ENCODE measurements at regions of chr18 and their contacts with region 1.

Region 1: DNA sequence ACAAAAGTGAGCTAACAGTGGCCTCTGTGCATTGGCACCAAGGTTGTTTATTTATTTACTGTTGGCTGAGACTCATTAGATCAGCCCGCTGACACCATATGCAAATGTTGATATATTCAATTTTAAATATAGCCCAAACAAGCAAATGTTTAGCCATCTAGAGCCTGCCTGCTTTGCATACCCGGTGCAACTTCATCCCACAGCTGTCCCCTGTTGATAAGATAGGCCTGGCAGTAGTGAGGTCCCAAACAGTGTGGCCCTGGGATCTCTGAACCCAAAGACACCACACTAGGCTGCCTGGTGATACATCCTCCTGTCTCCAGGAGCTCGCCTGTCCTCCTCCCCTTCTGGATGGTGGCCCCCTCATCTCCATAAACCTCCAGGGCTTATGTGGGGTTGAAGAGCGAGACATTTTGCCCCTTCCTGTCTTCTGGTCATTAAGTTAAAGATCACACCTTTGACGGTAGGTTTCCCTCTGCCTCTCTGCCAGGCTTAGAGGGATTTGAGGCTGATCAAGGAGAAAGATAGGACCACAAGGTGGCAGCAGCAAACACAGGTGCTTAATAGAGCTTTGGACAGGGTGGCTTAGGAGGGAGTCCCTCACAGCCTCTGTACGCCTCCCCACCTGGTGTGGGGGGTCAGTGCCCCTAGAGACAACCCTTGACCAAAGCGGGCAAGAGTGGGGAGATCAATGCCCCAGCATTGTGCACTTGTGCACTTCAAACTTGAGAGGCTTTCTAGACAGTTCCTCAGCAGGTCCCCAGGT is 23.7 kb upstream of the MYO5B start:
- DNase-seq: peak; percentile 38
- H3K4me3 Mint-ChIP-seq: no peak overlapping the region
- H3K27ac Mint-ChIP-seq: no peak overlapping the region
- H3K4me1 Mint-ChIP-seq: no peaks in the 10 kb centered on the region
- H3K27me3 Mint-ChIP-seq: peaks cover 18% of the 10 kb centered on the region

Region 2: DNA sequence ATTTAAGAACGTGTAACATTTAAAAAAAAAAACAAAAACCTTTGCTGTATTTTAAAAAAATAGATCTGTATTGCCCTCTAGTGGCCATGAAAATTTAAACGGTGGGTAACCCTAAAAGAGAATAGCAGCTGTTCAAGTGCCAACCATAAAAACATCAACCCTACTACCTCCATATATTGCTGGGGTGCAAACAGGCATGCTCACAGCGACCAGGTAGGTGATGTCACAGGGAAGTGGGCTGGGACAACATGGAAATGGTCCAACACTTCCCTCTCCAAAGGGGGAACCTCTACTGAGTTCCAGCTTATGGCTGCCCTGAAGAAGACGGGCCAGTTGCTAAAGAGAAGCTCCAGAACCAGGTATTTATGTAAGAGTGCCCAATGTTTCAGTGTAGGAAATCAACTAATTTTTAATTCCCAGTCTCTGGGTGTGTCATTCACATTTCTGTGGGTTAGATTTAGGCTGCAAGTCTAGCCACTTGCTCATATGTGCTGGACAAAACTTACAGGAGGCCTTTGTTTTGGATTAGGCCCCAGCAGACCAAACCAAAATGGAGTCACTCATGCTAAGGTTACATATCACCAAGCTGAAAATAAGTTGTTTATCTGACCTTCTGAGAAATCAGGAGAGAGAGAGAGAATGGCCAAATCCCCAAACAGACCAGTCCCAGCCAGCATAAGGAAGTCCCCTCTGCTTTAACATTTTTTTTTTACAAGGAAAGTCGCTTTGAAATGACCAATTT is 210.8 kb after region 1 on chr18:
- CTCF ChIA-PET with region 1: interaction called, 10 read pairs
- POLR2A ChIA-PET with region 1: no interaction called
- intact Hi-C with region 1: loop called (anchors 1 kb)
- DNase-seq: no peak
- H3K4me3 Mint-ChIP-seq: no peak overlapping the region
- H3K27ac Mint-ChIP-seq: no peak overlapping the region
- H3K4me1 Mint-ChIP-seq: no peaks in the 10 kb centered on the region
- H3K27me3 Mint-ChIP-seq: peaks cover 14% of the 10 kb centered on the region